ENCODE measurements at regions of chr2 and their contacts with region 1.

Region 1: GRCh38 chr2:105337124-105338019 is at the start of gene C2orf49:
- DNase-seq: peak; percentile 86
- H3K4me3 Mint-ChIP-seq: peak within 1 kb of the TSS; percentile 99
- H3K27ac Mint-ChIP-seq: peak within 1 kb of the TSS; percentile 100
- H3K4me1 Mint-ChIP-seq: peaks cover 29% of the 10 kb centered on the region
- H3K27me3 Mint-ChIP-seq: no peaks in the 10 kb centered on the region
- total RNA-seq, gene C2orf49: 18.6 and 19.0 TPM in 2 replicates

Region 2: GRCh38 chr2:105398699-105399432 is 61.5 kb after region 1 on chr2 and contains the start of gene FHL2:
- intact Hi-C with region 1: loop called (anchors 2 kb)
- DNase-seq: peak; percentile 69
- H3K4me3 Mint-ChIP-seq: peak within 1 kb of the TSS; percentile 82
- H3K27ac Mint-ChIP-seq: peak within 1 kb of the TSS; percentile 61
- H3K4me1 Mint-ChIP-seq: peaks cover 10% of the 10 kb centered on the region
- H3K27me3 Mint-ChIP-seq: peaks cover 29% of the 10 kb centered on the region
- total RNA-seq, gene FHL2: 5.3 and 5.6 TPM in 2 replicates

Region 3: DNA sequence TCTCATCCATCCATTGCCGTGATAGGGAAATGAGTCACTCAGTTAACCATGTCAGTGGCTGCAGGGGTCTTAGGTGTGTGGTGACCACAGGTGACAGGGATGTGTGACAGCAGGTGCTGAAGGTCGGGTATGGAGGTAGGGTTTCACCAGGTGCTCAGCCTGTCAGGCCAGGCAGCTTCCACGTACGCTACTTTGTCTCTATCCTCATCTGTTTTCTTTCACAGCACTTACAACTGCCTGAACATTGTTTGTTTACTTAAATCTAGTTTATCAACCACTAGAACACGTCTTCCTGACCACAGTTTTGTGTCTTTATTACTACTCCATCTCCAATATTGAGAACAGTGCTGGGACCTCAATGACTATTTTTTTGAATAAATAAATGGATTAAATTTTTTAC is 868.1 kb after region 1 on chr2:
- intact Hi-C with region 1: no loop called
- DNase-seq: no peak
- H3K4me3 Mint-ChIP-seq: no peak overlapping the region
- H3K27ac Mint-ChIP-seq: no peak overlapping the region
- H3K4me1 Mint-ChIP-seq: no peaks in the 10 kb centered on the region
- H3K27me3 Mint-ChIP-seq: peaks cover 32% of the 10 kb centered on the region